ENCODE measurements at regions of chr12 and their contacts with region 1.

Region 1: DNA sequence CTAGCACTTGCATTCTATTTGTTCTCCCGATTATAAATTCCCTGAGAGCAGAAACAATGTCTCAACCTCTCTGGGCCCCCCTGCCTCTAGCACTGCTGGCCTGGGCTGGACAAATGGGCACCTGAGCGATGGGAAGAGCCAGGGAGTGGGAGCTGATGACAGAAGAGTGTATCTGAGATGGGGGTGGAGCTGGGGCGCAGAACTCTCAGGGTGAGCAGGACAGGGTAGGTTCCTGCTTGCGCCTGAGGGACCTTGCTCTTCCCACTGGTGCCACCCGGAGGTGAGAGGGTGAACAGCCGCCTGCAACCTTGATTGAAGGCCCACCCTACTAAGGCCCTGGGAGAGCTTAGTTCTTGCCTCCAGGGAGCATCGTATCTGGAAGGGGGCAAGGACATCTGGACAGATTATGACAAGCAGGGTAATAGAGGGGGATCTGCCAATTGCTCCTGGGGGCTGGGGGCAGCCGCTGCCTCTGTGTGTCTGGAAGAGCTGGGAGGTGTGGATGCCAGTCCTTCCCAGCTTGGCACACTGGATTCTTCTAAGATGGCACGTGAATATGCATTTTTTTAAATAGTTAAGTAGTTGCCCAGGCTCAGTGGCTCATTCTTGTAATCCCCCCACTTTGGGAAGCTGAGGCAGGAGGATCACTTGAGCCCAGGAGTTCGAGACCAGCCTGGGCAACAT is 43.0 kb upstream of the TSPAN9 start:
- DNase-seq: peak; percentile 75 to 90
- ATAC-seq: peak; percentile 85 to 89 (median 88)
- H3K4me3 ChIP-seq: peak overlapping the region; percentile 45
- H3K27ac ChIP-seq: peak overlapping the region; percentile 86
- H3K4me1 ChIP-seq: peaks cover 36% of the 10 kb centered on the region
- H3K27me3 ChIP-seq: no peaks in the 10 kb centered on the region
- CTCF ChIP-seq: peak; percentile 79

Region 2: DNA sequence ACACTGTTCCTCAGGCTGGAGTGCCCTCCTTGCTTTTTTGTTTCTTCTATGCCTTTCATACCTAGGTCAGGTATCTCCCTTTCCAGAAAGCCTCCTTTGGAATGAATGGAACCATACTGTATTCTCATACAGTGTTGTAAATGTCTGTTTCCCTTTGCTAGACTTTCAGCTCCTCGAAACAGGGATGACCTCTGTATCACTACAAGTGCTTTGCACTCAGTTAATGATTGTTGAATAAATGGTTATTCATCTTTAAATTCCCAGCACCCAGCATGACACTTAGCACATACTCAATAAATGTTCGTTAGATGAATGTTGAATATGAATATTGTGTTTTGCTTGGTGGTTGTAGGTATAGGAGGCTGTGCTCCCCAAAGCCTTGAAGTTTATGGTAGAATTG is 149.4 kb before region 1 on chr12:
- intact Hi-C with region 1: loop called (anchors 2 kb)
- DNase-seq: no peak
- ATAC-seq: no peak
- H3K4me3 ChIP-seq: no peak overlapping the region
- H3K27ac ChIP-seq: no peak overlapping the region
- H3K4me1 ChIP-seq: no peaks in the 10 kb centered on the region
- H3K27me3 ChIP-seq: no peaks in the 10 kb centered on the region
- CTCF ChIP-seq: no peak

Region 3: DNA sequence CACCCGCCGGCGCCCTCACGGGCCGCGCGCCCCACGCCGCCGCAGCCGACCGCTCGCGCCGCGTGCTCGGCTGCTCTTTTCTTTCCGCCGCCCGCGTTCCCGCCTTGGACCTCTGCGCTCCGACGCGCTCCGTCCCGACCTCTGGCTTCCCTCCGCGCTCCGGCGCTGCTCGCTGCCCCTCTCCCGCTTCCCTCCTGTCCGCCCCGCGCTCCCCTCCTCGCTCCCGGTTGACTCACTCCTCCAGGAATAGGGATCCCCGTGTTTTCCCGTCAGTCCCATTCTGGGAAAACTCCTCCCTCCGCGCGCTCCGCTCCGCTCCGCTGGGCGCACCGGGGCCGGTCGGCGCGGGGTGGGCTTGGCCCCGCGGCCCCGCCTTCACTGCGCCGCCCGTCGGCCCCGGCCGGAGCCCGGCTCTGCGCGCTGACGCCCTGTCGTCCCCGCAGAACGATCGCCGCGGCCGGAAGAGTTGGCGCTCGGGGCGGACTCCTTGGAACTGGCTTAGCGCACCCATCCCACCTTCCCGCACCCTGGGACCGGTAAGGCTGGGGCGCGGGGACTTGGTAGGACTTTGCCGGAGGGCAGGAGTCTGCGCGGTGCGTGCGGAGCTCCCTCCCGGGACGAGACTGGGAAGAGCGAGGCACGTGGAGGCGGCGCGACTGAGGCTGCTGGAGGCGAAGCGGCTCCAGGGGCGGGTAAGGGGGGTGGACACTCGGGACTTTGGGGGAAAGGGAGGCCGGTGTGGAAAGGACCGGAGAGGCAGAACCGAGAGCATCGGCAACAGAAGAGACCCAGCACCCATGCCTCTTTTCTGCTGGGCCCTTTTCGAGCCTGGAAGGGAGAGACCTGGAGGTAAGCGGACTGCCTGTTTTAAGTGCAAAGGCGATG is 74.5 kb before region 1 on chr12:
- intact Hi-C with region 1: loop called in 1 of 2 experiments (anchors 2 kb)
- DNase-seq: peak; percentile 76 to 80
- ATAC-seq: peak; percentile 61 to 70 (median 68)
- H3K4me3 ChIP-seq: peak overlapping the region; percentile 76
- H3K27ac ChIP-seq: peak overlapping the region; percentile 85
- H3K4me1 ChIP-seq: peaks cover 23% of the 10 kb centered on the region
- H3K27me3 ChIP-seq: no peaks in the 10 kb centered on the region
- CTCF ChIP-seq: peak; percentile 9

Region 4: GRCh38 chr12:2967651-2968050 is 66.6 kb before region 1 on chr12:
- intact Hi-C with region 1: loop called (anchors 5 kb)
- DNase-seq: no peak
- ATAC-seq: no peak
- H3K4me3 ChIP-seq: no peak overlapping the region
- H3K27ac ChIP-seq: no peak overlapping the region
- H3K4me1 ChIP-seq: peaks cover 45% of the 10 kb centered on the region
- H3K27me3 ChIP-seq: no peaks in the 10 kb centered on the region
- CTCF ChIP-seq: no peak

Region 5: DNA sequence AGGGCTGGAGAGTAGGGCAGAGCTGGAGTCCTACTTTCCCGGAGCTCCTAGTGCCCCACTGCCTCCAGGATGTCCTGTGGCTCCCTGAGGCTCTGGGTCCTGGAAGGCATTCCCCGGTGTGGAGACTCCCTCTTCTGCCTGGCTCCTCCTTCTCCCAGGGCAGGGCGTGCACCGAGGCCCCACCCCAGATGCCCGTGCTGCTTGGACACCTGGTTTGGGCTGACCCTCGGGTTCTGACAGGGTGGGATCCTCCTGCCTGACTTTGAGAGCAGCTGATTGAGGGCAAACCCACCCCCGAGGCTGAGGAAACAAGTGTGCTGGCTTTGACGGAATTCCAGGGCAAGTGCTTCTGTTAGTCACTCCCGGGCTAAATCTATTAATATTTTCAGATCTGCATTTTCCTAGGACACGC is 59.6 kb before region 1 on chr12:
- intact Hi-C with region 1: loop called (anchors 5 kb)
- DNase-seq: no peak
- ATAC-seq: peak; percentile 60 to 83 (median 64)
- H3K4me3 ChIP-seq: peak overlapping the region; percentile 28
- H3K27ac ChIP-seq: peak overlapping the region; percentile 86
- H3K4me1 ChIP-seq: peaks cover 59% of the 10 kb centered on the region
- H3K27me3 ChIP-seq: no peaks in the 10 kb centered on the region
- CTCF ChIP-seq: no peak

Region 6: GRCh38 chr12:2998789-2999264 is 35.4 kb before region 1 on chr12:
- intact Hi-C with region 1: loop called in 1 of 2 experiments (anchors 2 kb)
- DNase-seq: peak; percentile 91 to 98
- ATAC-seq: peak; percentile 85 to 92 (median 88)
- H3K4me3 ChIP-seq: peak overlapping the region; percentile 44
- H3K27ac ChIP-seq: peak overlapping the region; percentile 90
- H3K4me1 ChIP-seq: peaks cover 71% of the 10 kb centered on the region
- H3K27me3 ChIP-seq: no peaks in the 10 kb centered on the region
- CTCF ChIP-seq: no peak

Measured in psoas muscle (tissue), 8 donors.